HAP-1 (cell line): ENCODE measurements at regions of chr11 and their contacts with region 1.

Region 1: GRCh38 chr11:119110439-119110838 is 3.3 kb downstream of the C2CD2L start:
- DNase-seq: no peak
- H3K4me3 ChIP-seq: no peak overlapping the region
- H3K4me1 ChIP-seq: peaks cover 16% of the 10 kb centered on the region
- H3K27me3 ChIP-seq: no peaks in the 10 kb centered on the region

Region 2: GRCh38 chr11:119161871-119162623 is 51.6 kb after region 1 on chr11:
- in situ Hi-C with region 1: loop called (anchors 5 kb)
- DNase-seq: no peak
- H3K4me3 ChIP-seq: no peak overlapping the region
- H3K4me1 ChIP-seq: no peaks in the 10 kb centered on the region
- H3K27me3 ChIP-seq: no peaks in the 10 kb centered on the region